ENCODE measurements at regions of chr3 and their contacts with region 1.

Region 1: GRCh38 chr3:20039766-20040475 is at the start of gene KAT2B:
- DNase-seq: peak; percentile 81 to 88
- ATAC-seq: peak; percentile 79 to 81 (median 80)
- H3K4me3 ChIP-seq: peak within 1 kb of the TSS; percentile 78
- H3K27ac ChIP-seq: peak within 1 kb of the TSS; percentile 95
- H3K4me1 ChIP-seq: peaks cover 36% of the 10 kb centered on the region
- H3K27me3 ChIP-seq: no peaks in the 10 kb centered on the region
- CTCF ChIP-seq: peak; percentile 67
- total RNA-seq, gene KAT2B: 27.8 to 62.2 (median 41.9) TPM

Region 2: GRCh38 chr3:19946832-19947548 is 92.9 kb before region 1 on chr3 and contains the start of gene RAB5A:
- intact Hi-C with region 1: loop called (anchors 2 to 5 kb)
- DNase-seq: peak; percentile 97 to 98
- ATAC-seq: peak; percentile 95 to 98 (median 97)
- H3K4me3 ChIP-seq: peak within 1 kb of the TSS; percentile 89
- H3K27ac ChIP-seq: peak within 1 kb of the TSS; percentile 100
- H3K4me1 ChIP-seq: peaks cover 36% of the 10 kb centered on the region
- H3K27me3 ChIP-seq: no peaks in the 10 kb centered on the region
- CTCF ChIP-seq: no peak
- total RNA-seq, gene RAB5A: 38.5 to 62.3 (median 54.9) TPM

Region 3: DNA sequence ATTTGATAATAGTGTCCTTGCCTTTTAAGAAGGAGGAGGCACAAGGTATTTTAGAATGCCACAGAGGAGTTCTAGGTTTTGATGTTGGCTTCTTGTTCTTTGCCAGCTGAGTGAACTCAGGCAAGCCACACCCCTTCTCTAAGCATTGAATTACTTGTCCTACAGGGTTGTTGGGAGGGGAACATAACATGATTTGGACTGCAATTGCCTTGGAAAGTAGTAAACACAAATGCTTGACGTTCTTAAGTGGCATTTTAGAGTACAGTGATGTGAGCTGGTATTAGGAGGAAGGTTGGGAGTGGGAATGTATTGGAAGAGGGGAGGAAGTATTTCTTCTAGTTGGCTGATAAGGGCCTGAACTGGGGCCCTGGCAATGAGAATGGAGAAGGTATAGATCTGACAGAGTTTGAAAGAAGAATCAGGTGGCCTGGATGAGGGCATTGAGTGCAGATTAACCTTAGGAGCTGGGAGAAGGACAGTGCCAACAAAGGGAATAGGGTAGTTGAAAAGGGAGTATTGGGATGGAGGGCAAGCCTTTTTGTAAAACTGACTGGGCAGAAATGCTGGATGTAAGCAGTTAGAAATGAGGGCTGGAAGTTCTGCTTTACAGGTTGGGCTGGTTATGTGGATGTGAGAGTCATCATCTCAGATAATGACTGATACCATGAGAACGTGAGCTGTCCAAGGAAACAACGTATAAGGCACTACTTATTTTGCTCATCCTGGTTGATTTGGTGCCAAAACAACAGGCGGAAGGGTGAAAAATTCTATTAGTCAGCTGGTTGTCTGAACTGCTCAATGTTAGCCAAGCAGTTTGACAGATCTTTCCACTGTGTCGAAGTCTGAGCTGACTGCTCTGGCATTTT is 17.0 kb after region 1 on chr3:
- intact Hi-C with region 1: loop called in 1 of 2 experiments (anchors 2 kb)
- DNase-seq: no peak
- ATAC-seq: peak; percentile 27 to 64 (median 48)
- H3K4me3 ChIP-seq: no peak overlapping the region
- H3K27ac ChIP-seq: peak overlapping the region; percentile 84
- H3K4me1 ChIP-seq: peaks cover 55% of the 10 kb centered on the region
- H3K27me3 ChIP-seq: no peaks in the 10 kb centered on the region
- CTCF ChIP-seq: no peak

Region 4: DNA sequence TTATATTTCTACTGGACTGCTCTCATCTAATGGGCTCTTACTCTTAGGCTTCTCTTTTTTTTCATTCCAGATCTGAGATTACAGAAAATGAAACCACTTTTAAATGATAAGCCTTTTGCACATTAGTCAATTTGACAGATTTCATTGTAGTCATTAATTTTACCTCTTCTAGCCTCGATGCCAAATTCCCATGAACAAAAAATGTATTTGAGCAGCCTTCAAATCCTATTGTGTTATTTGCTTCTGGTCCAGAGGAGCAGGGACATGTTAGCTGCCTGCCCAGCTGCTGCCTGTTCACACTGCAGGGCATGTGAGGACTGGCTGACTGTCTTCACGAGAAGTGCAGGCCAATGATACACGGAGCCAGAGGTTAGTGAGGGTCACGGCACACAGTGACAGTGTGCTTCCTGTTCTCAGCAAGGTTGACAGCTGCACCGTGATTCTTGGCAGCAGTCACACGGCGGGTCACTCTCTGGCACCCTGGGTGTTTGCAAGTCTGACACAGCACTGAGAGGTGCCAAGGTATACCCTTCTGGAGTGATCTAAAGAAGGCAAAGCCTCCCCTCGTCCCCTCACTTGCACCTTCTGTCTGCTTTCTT is 41.1 kb after region 1 on chr3:
- intact Hi-C with region 1: loop called (anchors 1 to 5 kb)
- DNase-seq: peak; percentile 81 to 95
- ATAC-seq: peak; percentile 99 to 100 (median 99)
- H3K4me3 ChIP-seq: no peak overlapping the region
- H3K27ac ChIP-seq: peak overlapping the region; percentile 86
- H3K4me1 ChIP-seq: peaks cover 26% of the 10 kb centered on the region
- H3K27me3 ChIP-seq: no peaks in the 10 kb centered on the region
- CTCF ChIP-seq: no peak

Region 5: GRCh38 chr3:20160230-20160629 is 120.3 kb after region 1 on chr3:
- intact Hi-C with region 1: no loop called
- DNase-seq: no peak
- ATAC-seq: no peak
- H3K4me3 ChIP-seq: no peak overlapping the region
- H3K27ac ChIP-seq: no peak overlapping the region
- H3K4me1 ChIP-seq: no peaks in the 10 kb centered on the region
- H3K27me3 ChIP-seq: no peaks in the 10 kb centered on the region
- CTCF ChIP-seq: no peak

Region 6: DNA sequence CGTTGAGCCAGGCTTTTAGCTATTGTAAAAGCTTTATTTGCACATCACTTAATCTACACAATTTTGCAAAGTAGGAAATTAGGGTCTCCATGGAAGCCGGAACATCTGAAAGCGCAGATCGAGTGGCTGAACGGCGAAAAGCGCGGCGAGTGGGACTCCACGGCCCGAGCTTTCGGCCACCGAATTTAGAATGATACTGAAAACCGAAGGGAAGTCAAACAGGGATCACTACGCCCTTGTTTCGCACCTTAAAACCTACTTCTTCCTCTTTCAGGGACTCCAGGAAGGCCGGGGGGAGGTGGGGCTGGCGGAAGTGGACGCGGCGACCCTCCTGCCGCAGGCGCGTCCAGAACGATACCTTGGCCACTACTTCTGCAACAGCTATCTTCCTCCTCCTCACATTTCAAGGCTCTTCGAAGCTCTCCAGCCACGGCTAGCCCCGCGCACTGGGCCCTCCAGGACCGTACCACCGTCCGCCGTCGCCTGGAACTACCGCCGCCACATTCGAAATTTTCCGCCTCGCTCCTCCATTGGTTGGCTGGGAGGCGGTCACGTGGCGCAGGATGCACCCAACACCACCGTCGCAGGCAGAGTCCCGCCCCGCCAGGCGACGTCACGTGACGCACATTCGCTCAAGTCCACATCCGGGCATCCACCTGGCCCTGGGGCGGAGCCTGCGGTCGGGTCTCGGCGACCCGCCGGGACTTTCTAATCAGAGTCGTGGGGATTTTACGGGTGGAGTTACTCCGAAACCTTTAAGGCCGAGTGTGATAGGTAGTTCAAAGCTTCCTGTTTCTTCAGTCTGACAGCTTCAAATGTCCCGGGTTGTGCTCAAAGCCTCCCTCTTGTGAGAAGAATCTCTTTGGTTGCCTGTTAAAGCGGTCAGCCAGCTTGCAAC is 146.0 kb after region 1 on chr3 and contains the start of gene SGO1:
- intact Hi-C with region 1: loop called (anchors 5 to 10 kb)
- DNase-seq: peak; percentile 99 to 100
- ATAC-seq: peak; percentile 100
- H3K4me3 ChIP-seq: peak within 1 kb of the TSS; percentile 74
- H3K27ac ChIP-seq: peak within 1 kb of the TSS; percentile 87
- H3K4me1 ChIP-seq: peaks cover 9% of the 10 kb centered on the region
- H3K27me3 ChIP-seq: no peaks in the 10 kb centered on the region
- CTCF ChIP-seq: no peak
- total RNA-seq, gene SGO1: not detected

Region 7: GRCh38 chr3:20344400-20344959 is 304.6 kb after region 1 on chr3:
- intact Hi-C with region 1: no loop called
- DNase-seq: no peak
- ATAC-seq: no peak
- H3K4me3 ChIP-seq: no peak overlapping the region
- H3K27ac ChIP-seq: no peak overlapping the region
- H3K4me1 ChIP-seq: no peaks in the 10 kb centered on the region
- H3K27me3 ChIP-seq: no peaks in the 10 kb centered on the region
- CTCF ChIP-seq: no peak

Measured in psoas muscle (tissue), 8 donors.